IMR-90 (cell line): ENCODE measurements at regions of chr11 and their contacts with region 1.

Region 1: GRCh38 chr11:45371251-45372115 is 85.3 kb upstream of the SYT13 start:
- DNase-seq: peak; percentile 46
- ATAC-seq: peak; percentile 75
- H3K4me3 ChIP-seq: no peak overlapping the region
- H3K27ac ChIP-seq: no peak overlapping the region
- H3K4me1 ChIP-seq: no peaks in the 10 kb centered on the region
- H3K27me3 ChIP-seq: peaks cover 39% of the 10 kb centered on the region
- CTCF ChIP-seq: peak; percentile 80
- POLR2A ChIP-seq: no peak
- RAD21 ChIP-seq: peak; percentile 82

Region 2: GRCh38 chr11:45485070-45485707 is 113.7 kb after region 1 on chr11:
- CTCF ChIA-PET with region 1: no interaction called
- POLR2A ChIA-PET with region 1: no interaction called
- dilution Hi-C with region 1: no loop called
- in situ Hi-C with region 1: no loop called
- intact Hi-C with region 1: no loop called
- DNase-seq: no peak
- ATAC-seq: no peak
- H3K4me3 ChIP-seq: no peak overlapping the region
- H3K27ac ChIP-seq: no peak overlapping the region
- H3K4me1 ChIP-seq: no peaks in the 10 kb centered on the region
- H3K27me3 ChIP-seq: peaks cover 2% of the 10 kb centered on the region; the same call in 1 of the 2 replicates
- CTCF ChIP-seq: no peak
- POLR2A ChIP-seq: no peak
- RAD21 ChIP-seq: no peak

Region 3: DNA sequence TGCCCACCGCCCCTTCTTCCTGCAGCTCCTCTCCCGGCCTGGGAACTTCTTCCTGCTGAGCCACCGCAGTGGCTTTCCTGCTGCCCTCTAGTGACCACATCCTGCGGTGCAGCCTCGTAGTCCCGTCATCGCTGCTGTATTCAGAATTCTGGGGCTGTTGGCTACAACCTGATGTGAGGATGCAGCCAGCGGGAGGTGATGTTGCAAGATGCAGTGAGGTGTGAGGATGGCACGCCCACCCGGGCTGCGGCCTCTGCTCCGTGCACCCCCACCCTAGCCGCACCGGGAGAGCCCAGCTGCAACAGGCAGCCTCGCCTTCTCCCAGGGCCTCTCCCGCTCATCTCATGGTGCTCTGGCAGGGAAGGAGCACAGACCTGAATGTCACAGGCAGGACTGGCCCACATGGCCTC is 283.9 kb after region 1 on chr11:
- CTCF ChIA-PET with region 1: interaction called, 25 read pairs
- POLR2A ChIA-PET with region 1: no interaction called
- dilution Hi-C with region 1: no loop called
- in situ Hi-C with region 1: loop called (anchors 5 kb)
- intact Hi-C with region 1: loop called (anchors 1 kb)
- DNase-seq: peak; percentile 51
- ATAC-seq: peak; percentile 95
- H3K4me3 ChIP-seq: no peak overlapping the region
- H3K27ac ChIP-seq: no peak overlapping the region
- H3K4me1 ChIP-seq: no peaks in the 10 kb centered on the region
- H3K27me3 ChIP-seq: peaks cover 4% of the 10 kb centered on the region; the same call in 1 of the 2 replicates
- CTCF ChIP-seq: peak; percentile 79
- POLR2A ChIP-seq: no peak
- RAD21 ChIP-seq: peak; percentile 69

Region 4: GRCh38 chr11:45761659-45762058 is 390.2 kb after region 1 on chr11:
- CTCF ChIA-PET with region 1: no interaction called
- POLR2A ChIA-PET with region 1: no interaction called
- dilution Hi-C with region 1: no loop called
- in situ Hi-C with region 1: no loop called
- intact Hi-C with region 1: loop called (anchors 5 kb)
- DNase-seq: no peak
- ATAC-seq: no peak
- H3K4me3 ChIP-seq: no peak overlapping the region
- H3K27ac ChIP-seq: no peak overlapping the region
- H3K4me1 ChIP-seq: no peaks in the 10 kb centered on the region
- H3K27me3 ChIP-seq: peaks cover 8% of the 10 kb centered on the region
- CTCF ChIP-seq: no peak
- POLR2A ChIP-seq: no peak
- RAD21 ChIP-seq: no peak

Region 5: DNA sequence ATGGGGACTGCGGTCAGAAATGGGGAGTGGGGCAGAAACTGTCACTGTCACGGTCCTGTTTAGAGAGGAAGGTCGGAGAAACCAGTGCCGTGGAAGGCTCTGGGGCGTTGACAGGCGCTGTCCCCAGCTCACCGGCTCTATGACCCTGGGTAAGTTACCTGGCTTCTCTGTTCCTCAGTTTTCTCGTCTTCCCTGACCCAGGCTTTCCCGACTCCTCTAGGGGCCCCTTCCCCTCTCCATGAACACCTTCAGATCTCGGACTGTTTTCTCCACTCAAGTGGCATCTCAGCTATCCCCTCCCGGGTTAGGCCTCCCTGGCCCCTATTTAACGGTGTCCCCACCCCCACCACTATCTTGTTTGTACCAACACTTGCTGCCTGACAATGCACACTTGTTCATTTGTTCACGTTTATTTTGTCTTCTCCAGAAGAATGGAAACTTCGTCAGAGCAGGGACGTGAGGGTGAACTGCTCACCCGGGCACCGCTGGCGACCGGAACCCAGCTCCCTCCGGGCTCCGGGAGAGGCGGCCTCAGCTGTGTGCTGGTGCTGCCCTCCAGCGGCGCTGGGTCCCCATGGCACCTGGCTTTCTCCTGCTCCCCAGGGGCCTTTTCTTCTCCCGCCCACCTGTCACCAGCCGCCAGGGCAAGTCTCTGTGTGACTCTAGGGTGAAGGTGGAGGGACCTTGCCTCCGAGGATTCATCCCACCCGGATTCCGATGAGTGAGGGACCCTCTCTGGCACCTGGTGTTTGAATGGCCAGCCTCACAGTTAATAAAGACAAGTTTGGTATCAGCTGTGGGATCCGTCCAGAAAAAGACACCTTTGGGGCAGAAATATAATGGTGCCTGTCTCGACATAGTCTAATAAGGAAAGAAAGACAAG is 400.3 kb after region 1 on chr11:
- CTCF ChIA-PET with region 1: interaction called, 17 read pairs
- POLR2A ChIA-PET with region 1: no interaction called
- dilution Hi-C with region 1: no loop called
- in situ Hi-C with region 1: loop called (anchors 10 kb)
- intact Hi-C with region 1: loop called (anchors 1 kb)
- DNase-seq: peak; percentile 58
- ATAC-seq: peak; percentile 97
- H3K4me3 ChIP-seq: peak overlapping the region; percentile 47
- H3K27ac ChIP-seq: no peak overlapping the region
- H3K4me1 ChIP-seq: no peaks in the 10 kb centered on the region
- H3K27me3 ChIP-seq: peaks cover 20% of the 10 kb centered on the region
- CTCF ChIP-seq: peak; percentile 94
- POLR2A ChIP-seq: no peak
- RAD21 ChIP-seq: peak; percentile 86